ENCODE measurements at regions of chr16 and their contacts with region 1.

Region 1: DNA sequence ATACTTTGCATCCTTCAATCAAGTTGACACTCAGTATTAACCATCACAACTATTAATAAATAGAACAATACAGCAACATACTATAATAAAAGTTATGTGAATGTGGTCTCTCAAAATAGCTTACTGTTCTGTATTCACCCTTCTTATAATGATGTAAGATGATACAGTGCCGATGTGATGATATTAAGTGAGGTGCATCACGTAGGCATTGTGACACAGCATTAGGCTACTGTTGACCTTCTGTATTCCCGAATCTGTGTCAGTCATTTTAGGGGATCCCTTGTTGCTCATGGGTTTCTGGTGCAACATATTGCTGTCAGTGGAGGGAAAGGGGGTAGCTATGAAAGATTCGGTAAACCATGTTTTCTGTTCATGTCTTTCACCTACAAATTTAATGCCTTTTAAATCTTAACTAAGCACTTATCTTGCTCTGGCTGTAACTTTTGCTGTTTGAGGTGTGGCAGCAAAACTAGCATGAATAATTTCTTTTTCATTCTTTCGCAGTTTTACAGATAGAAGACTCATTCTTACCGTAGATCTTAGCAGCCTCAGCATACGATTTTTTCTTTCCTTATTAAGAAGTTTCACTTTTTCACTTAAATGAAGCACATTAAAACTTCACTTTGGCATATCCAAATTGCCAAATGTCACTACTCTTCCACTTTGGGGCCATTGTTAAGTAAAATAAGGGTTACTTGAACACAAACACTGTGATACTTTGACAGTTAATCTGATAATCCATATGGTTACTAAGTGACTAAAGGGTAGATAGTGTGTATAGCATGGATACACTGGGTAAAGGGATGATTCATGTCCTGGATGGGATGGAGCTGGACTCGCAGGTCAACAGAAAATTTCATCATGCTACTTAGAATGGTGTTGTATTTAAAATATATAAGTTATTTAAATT is 29.6 kb downstream of the NFAT5 start:
- DNase-seq: no peak
- ATAC-seq: no peak
- H3K4me3 ChIP-seq: no peak overlapping the region
- H3K27ac ChIP-seq: no peak overlapping the region
- H3K4me1 ChIP-seq: no peaks in the 10 kb centered on the region
- H3K27me3 ChIP-seq: no peaks in the 10 kb centered on the region
- CTCF ChIP-seq: no peak
- EP300 ChIP-seq: no peak
- POLR2A ChIP-seq: no peak
- RAD21 ChIP-seq: no peak

Region 2: GRCh38 chr16:69535123-69536050 is 60.0 kb before region 1 on chr16:
- CTCF ChIA-PET with region 1: no interaction called
- POLR2A ChIA-PET with region 1: interaction called, 13 read pairs
- RAD21 ChIA-PET with region 1: no interaction called
- SMC1A ChIA-PET with region 1: no interaction called
- in situ Hi-C with region 1: no loop called
- intact Hi-C with region 1: no loop called
- DNase-seq: no peak
- ATAC-seq: no peak
- H3K4me3 ChIP-seq: no peak overlapping the region
- H3K27ac ChIP-seq: no peak overlapping the region
- H3K4me1 ChIP-seq: peaks cover 5% of the 10 kb centered on the region
- H3K27me3 ChIP-seq: no peaks in the 10 kb centered on the region
- CTCF ChIP-seq: no peak
- EP300 ChIP-seq: no peak
- POLR2A ChIP-seq: no peak
- RAD21 ChIP-seq: no peak

Region 3: DNA sequence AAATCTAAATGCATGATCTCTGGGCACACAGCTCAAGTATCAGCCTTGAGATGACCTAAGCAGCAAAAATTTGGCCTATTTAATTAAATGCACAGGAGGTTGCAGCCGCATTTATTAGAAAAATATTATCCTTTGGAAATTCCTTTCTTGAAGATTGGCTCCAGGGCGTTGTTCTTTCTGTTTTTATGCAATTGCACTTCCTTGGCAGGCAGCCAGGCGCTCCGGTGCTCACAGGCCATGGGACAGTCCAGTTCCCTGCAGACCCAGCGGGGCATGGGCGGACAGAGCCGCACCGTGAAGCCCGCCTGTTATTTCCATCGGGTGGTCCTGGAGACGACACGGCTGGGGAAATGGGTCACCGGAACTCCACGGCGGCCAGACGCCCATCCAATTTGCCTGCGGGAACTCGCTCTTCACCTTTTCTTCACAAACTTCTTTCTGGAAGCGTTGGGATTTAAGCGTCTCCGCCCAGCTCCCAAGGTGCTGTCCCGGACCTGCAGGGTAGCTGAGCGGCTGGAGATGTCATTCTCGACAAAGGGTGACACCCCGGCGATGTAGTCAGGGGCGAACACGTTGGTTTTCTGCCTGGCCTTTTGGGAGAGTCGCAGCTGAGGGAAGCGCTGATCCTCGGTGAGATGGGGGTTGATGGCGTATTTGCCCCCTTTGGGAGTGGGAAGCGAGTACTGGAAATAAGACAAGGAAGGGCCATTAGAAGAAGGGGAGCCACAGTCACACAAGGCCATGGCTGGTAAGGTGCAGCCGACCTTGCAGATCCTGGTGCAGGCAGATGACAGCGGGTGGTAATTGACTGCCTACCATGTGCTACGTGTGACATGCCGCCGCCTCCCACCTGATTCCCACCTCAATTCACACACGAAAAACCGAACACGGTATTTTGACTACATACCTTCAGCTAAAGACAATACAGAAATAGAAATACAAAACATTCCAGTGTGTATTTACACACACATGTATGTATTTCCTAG is 146.8 kb after region 1 on chr16:
- CTCF ChIA-PET with region 1: no interaction called
- POLR2A ChIA-PET with region 1: no interaction called
- RAD21 ChIA-PET with region 1: no interaction called
- SMC1A ChIA-PET with region 1: no interaction called
- in situ Hi-C with region 1: no loop called
- intact Hi-C with region 1: no loop called
- DNase-seq: no peak
- ATAC-seq: no peak
- H3K4me3 ChIP-seq: no peak overlapping the region
- H3K27ac ChIP-seq: no peak overlapping the region
- H3K4me1 ChIP-seq: no peaks in the 10 kb centered on the region
- H3K27me3 ChIP-seq: no peaks in the 10 kb centered on the region
- CTCF ChIP-seq: no peak
- EP300 ChIP-seq: no peak
- POLR2A ChIP-seq: no peak
- RAD21 ChIP-seq: no peak